T-cell (primary cell): ENCODE measurements at regions of chr12 and their contacts with region 1.

Region 1: GRCh38 chr12:52023182-52023975 is 16.6 kb downstream of the TAMALIN start:
- DNase-seq: peak; percentile 70 to 94 (median 88)
- ATAC-seq: peak; percentile 61 to 78 (median 72)
- H3K4me3 ChIP-seq: peak overlapping the region; percentile 52 to 55
- H3K4me3 Mint-ChIP-seq: peak overlapping the region; percentile 74 to 85 (median 81)
- H3K27ac ChIP-seq: peak overlapping the region; percentile 61
- H3K27ac Mint-ChIP-seq: peak overlapping the region; percentile 92 to 96
- H3K4me1 ChIP-seq: peaks cover 9 to 48% of the 10 kb centered on the region in 2 experiments
- H3K4me1 Mint-ChIP-seq: peaks cover 37 to 42% (median 41%) of the 10 kb centered on the region in 3 donors
- H3K27me3 ChIP-seq: peaks cover 0 to 3% of the 10 kb centered on the region in 2 experiments
- H3K27me3 Mint-ChIP-seq: no peaks in the 10 kb centered on the region

Region 2: DNA sequence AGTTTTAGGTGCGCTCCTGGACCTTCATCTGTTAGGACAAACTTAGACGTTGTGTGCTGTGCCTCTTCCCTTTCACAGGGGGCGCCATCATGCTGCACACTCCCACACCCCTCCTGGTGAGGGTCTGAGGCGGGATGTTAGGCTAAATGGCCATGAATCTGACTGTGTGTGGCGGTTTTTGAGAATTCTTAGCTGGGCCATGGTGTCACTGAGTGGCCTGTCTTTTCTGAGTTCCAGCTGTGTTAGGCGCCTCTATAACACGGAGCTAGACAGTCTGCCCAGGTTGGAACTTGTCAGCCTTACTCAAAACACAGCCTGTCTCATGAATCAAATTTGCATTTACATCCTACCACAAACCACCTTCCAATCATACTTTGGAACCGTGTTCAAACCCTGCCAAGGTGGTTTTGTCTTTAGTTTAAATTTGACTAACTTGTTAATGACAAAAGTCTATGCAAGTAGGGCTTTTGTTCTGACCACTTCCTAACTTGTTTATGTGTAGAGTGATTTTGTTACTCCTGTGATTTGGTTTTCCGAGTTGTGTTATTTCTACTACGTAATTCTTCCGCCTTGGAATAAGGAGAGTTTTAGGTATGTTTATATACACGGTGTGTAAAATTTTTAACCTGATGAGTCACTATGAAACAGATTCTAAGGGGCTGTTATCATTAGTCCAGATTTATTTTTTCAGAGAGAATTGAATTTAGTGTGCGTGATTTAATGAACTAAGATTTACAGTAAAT is 52.3 kb before region 1 on chr12:
- CTCF ChIA-PET with region 1: interaction called, 9 read pairs
- POLR2A ChIA-PET with region 1: interaction called, 3 to 17 read pairs
- DNase-seq: peak in 17 of 35 experiments; percentile 6 to 65 (median 19)
- ATAC-seq: peak; percentile 64 to 71 (median 66)
- H3K4me3 ChIP-seq: no peak overlapping the region
- H3K4me3 Mint-ChIP-seq: peak overlapping the region; percentile 24 to 64 (median 41)
- H3K27ac ChIP-seq: no peak overlapping the region
- H3K27ac Mint-ChIP-seq: peak overlapping the region; percentile 79 to 89
- H3K4me1 ChIP-seq: peaks cover 54 to 63% of the 10 kb centered on the region in 2 experiments
- H3K4me1 Mint-ChIP-seq: peaks cover 65 to 70% (median 67%) of the 10 kb centered on the region in 3 donors
- H3K27me3 ChIP-seq: no peaks in the 10 kb centered on the region
- H3K27me3 Mint-ChIP-seq: no peaks in the 10 kb centered on the region

Region 3: DNA sequence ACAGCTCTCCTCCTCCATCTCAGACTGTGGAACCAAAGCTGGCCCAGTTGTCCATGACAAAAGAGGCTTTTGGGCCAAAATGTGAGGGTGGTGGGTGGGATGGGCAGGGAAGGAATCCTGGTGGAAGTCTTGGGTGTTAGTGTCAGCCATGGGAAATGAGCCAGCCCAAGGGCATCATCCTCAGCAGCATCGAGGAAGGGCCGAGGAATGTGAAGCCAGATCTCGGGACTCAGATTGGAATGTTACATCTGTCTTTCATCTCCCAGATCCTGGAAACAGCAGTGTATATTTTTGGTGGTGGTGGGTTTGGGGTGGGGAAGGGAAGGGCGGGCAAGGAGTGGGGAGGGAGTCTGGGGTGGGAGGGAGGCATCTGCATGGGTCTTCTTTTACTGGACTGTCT is 28.4 kb before region 1 on chr12:
- CTCF ChIA-PET with region 1: interaction called, 17 to 53 read pairs
- POLR2A ChIA-PET with region 1: interaction called in 1 of 2 experiments, 11 read pairs
- DNase-seq: no peak
- ATAC-seq: no peak
- H3K4me3 ChIP-seq: no peak overlapping the region
- H3K4me3 Mint-ChIP-seq: no peak overlapping the region
- H3K27ac ChIP-seq: no peak overlapping the region
- H3K27ac Mint-ChIP-seq: no peak overlapping the region
- H3K4me1 ChIP-seq: peaks cover 0 to 3% of the 10 kb centered on the region in 2 experiments
- H3K4me1 Mint-ChIP-seq: peaks cover 0 to 16% (median 5%) of the 10 kb centered on the region in 3 donors
- H3K27me3 ChIP-seq: no peaks in the 10 kb centered on the region
- H3K27me3 Mint-ChIP-seq: no peaks in the 10 kb centered on the region

Region 4: GRCh38 chr12:52004042-52004648 is 19.2 kb before region 1 on chr12:
- CTCF ChIA-PET with region 1: interaction called, 18 to 19 read pairs
- POLR2A ChIA-PET with region 1: interaction called, 13 to 15 read pairs
- DNase-seq: peak in 1 of 35 experiments; percentile 41
- ATAC-seq: no peak
- H3K4me3 ChIP-seq: no peak overlapping the region
- H3K4me3 Mint-ChIP-seq: no peak overlapping the region
- H3K27ac ChIP-seq: no peak overlapping the region
- H3K27ac Mint-ChIP-seq: peak overlapping the region; percentile 39 to 43
- H3K4me1 ChIP-seq: peaks cover 3 to 33% of the 10 kb centered on the region in 2 experiments
- H3K4me1 Mint-ChIP-seq: peaks cover 16 to 32% (median 24%) of the 10 kb centered on the region in 3 donors
- H3K27me3 ChIP-seq: peaks cover 0 to 28% of the 10 kb centered on the region in 2 experiments
- H3K27me3 Mint-ChIP-seq: no peaks in the 10 kb centered on the region

Region 5: GRCh38 chr12:52050761-52051541 is 27.6 kb after region 1 on chr12 and contains the start of gene NR4A1:
- CTCF ChIA-PET with region 1: interaction called, 7 to 43 read pairs
- POLR2A ChIA-PET with region 1: interaction called in 1 of 2 experiments, 16 read pairs
- DNase-seq: peak; percentile 94 to 100 (median 99)
- ATAC-seq: peak; percentile 85 to 92 (median 90)
- H3K4me3 ChIP-seq: peak within 1 kb of the TSS; percentile 91
- H3K4me3 Mint-ChIP-seq: peak within 1 kb of the TSS; percentile 88 to 90 (median 89)
- H3K27ac ChIP-seq: peak within 1 kb of the TSS; percentile 99
- H3K27ac Mint-ChIP-seq: peak within 1 kb of the TSS; percentile 91 to 93
- H3K4me1 ChIP-seq: peaks cover 19 to 39% of the 10 kb centered on the region in 2 experiments
- H3K4me1 Mint-ChIP-seq: peaks cover 34 to 41% (median 38%) of the 10 kb centered on the region in 3 donors
- H3K27me3 ChIP-seq: peaks cover 0 to 18% of the 10 kb centered on the region in 2 experiments
- H3K27me3 Mint-ChIP-seq: peaks cover 0 to 4% of the 10 kb centered on the region in 2 donors
- total RNA-seq, gene NR4A1: 5.9 to 103 (median 7.3) TPM

Region 6: DNA sequence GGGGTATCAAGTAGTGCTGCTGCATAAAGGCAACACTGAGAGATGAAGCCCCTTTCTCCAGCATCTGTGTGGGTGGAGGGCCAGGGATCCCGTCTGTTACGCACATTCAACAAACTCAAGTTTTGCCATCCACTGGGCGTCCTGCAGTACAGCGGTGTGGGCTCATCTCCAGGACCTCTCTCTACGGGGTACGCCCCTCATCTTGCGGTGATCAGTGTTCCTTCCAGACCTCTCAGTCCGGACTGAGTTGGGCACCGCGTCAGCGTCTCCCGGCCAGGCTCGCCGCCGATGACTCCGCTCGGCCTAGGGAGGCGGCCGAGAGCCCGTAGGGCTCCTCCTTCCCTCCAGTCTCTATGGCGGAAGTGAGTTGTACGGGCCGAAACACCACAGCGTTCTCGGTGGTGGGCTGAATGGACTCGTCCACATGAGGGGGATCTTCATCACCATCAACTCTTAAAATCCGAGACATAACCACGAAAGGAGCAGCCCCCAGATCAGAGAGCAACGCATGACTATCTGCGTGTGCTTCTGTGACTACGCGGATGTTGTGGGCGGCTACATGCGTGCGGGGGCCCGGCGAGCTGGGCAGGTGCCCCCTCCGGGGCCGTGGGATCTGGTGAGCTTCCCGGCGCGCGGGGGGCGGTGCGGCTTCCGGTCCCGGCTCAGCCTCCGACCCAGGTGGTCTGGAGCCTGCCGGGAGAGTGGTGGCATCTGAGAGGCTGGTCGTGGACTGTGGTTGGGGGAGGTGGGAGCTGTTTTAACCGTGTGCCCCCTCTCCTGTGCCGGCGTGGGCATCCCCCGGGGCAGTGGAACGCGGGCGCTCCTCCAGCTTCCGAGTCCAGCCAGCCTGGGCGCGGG is 46.2 kb after region 1 on chr12 and contains the start of gene ATG101:
- CTCF ChIA-PET with region 1: interaction called, 21 to 116 read pairs
- POLR2A ChIA-PET with region 1: interaction called, 3 to 6 read pairs
- DNase-seq: peak; percentile 76 to 93 (median 81)
- ATAC-seq: peak; percentile 92 to 97 (median 96)
- H3K4me3 ChIP-seq: peak within 1 kb of the TSS; percentile 93 to 99
- H3K4me3 Mint-ChIP-seq: peak within 1 kb of the TSS; percentile 91 to 98 (median 98)
- H3K27ac ChIP-seq: peak within 1 kb of the TSS; percentile 91
- H3K27ac Mint-ChIP-seq: peak within 1 kb of the TSS; percentile 98 to 99
- H3K4me1 ChIP-seq: peaks cover 20 to 38% of the 10 kb centered on the region in 2 experiments
- H3K4me1 Mint-ChIP-seq: peaks cover 42 to 47% (median 46%) of the 10 kb centered on the region in 3 donors
- H3K27me3 ChIP-seq: no peaks in the 10 kb centered on the region
- H3K27me3 Mint-ChIP-seq: peaks cover 0 to 7% of the 10 kb centered on the region in 2 donors
- total RNA-seq, gene ATG101: 24.8 to 30.3 (median 25.9) TPM

Region 7: DNA sequence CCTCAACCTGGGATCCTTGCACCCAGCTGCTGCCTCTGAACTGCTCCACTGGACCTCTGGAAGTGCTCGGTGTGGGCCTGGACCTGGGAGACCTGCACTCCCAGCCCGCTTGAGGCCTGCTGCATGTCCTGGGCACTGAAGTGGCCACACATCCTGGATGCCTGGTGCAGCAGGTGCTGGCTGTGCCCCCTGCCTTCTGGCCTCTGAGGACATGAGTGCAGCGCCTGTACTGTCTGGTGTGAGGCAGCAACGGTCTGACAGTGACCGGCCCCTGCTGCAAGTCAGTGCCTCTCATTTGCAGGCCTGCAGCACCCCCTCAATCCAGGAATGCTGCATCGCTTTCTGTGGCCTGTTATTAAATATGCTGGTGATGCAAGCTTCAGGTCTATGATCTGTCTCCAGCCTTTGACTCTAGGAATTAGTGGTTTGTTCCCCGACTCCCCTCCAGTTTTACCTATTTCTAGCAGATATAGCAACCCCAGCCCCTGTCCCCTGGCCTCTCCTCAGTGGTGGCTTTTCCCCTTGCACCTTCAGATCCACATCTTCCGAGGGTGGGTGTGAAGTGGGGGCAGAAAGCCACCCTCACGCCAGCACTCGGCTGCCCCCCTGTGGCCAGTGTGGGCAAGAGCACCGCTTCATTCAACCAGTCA is 59.7 kb after region 1 on chr12:
- CTCF ChIA-PET with region 1: interaction called, 31 to 33 read pairs
- POLR2A ChIA-PET with region 1: no interaction called
- DNase-seq: peak; percentile 31 to 82 (median 56)
- ATAC-seq: peak; percentile 74 to 79 (median 76)
- H3K4me3 ChIP-seq: no peak overlapping the region
- H3K4me3 Mint-ChIP-seq: no peak overlapping the region
- H3K27ac ChIP-seq: no peak overlapping the region
- H3K27ac Mint-ChIP-seq: peak overlapping the region in 1 of 2 donors; percentile 30
- H3K4me1 ChIP-seq: peaks cover 6 to 28% of the 10 kb centered on the region in 2 experiments
- H3K4me1 Mint-ChIP-seq: peaks cover 12 to 15% (median 13%) of the 10 kb centered on the region in 3 donors
- H3K27me3 ChIP-seq: peaks cover 0 to 21% of the 10 kb centered on the region in 2 experiments
- H3K27me3 Mint-ChIP-seq: peaks cover 11 to 16% of the 10 kb centered on the region in 2 donors

Region 8: DNA sequence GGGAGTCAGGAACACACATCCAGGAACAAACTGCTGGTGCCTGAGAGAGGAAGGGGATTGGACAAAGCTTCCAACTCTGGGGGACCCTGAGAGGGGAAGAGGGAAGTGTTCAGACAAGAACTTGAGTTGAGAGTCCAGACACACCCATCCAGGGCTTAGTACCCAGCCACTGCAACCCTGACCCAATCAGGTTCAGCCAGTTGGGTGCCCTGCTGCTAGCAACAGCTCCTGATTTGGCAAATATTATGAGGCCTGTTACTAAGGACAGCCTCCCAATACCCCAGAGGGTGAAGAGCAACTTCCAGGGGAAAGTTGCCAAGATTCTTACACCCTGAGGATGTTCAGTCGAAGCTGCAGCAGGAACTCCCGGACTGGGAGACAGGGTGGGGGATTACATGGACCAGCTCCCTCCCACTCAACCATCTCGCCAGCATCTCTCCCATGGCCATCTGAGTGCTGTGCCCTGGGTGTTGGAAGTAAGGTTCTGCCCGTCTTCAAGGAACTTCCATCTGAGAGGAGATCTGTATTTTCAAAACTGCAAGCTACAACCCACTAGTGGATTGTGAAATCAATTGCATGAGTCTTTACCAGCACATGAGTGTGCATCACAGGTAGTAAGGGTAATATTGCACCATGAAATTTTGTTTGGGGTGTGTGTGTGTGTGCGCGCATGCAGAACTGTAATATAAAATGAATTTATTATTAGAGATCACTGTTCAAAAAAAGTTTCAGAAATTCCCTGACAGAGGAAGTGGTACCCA is 836.9 kb after region 1 on chr12:
- CTCF ChIA-PET with region 1: no interaction called
- POLR2A ChIA-PET with region 1: no interaction called
- DNase-seq: no peak
- ATAC-seq: no peak
- H3K4me3 ChIP-seq: no peak overlapping the region
- H3K4me3 Mint-ChIP-seq: no peak overlapping the region
- H3K27ac ChIP-seq: no peak overlapping the region
- H3K27ac Mint-ChIP-seq: no peak overlapping the region
- H3K4me1 ChIP-seq: no peaks in the 10 kb centered on the region
- H3K4me1 Mint-ChIP-seq: peaks cover 0 to 3% (median 0%) of the 10 kb centered on the region in 3 donors
- H3K27me3 ChIP-seq: peaks cover 0 to 7% of the 10 kb centered on the region in 2 experiments
- H3K27me3 Mint-ChIP-seq: no peaks in the 10 kb centered on the region